Endothelial cell of umbilical vein (primary cell): ENCODE measurements at regions of chr17 and their contacts with region 1.

Region 1: GRCh38 chr17:57875309-57876115 is 25.7 kb upstream of the MRPS23 start:
- DNase-seq: peak; percentile 98
- H3K4me3 ChIP-seq: peak overlapping the region in 1 of 3 experiments; percentile 12
- H3K27ac ChIP-seq: peak overlapping the region; percentile 96
- H3K4me1 ChIP-seq: peaks cover 58% of the 10 kb centered on the region
- H3K27me3 ChIP-seq: no peaks in the 10 kb centered on the region
- CTCF ChIP-seq: peak; percentile 57 to 58
- POLR2A ChIP-seq: peak; percentile 5

Region 2: DNA sequence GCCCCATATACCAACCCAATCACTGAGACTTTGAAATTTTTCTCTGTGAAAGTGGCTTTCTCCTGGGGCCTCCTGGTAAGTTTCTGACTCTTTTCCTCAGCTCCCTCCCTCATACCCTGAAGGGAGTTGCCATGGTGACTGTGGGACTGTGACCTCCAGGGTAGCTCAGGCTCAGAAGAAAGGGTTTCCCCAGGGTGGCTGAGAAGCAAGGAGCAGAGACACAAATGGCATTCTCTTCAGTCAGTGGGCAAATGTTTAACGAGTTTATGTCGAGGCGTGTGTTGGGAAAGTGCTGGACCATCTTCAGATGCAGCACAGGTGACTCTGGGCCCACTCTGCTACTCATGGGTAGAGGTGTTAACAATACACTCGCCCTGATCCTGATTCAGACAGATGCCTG is 72.5 kb before region 1 on chr17:
- CTCF ChIA-PET with region 1: no interaction called
- POLR2A ChIA-PET with region 1: no interaction called
- dilution Hi-C with region 1: no loop called
- intact Hi-C with region 1: no loop called
- DNase-seq: no peak
- H3K4me3 ChIP-seq: no peak overlapping the region
- H3K27ac ChIP-seq: no peak overlapping the region
- H3K4me1 ChIP-seq: no peaks in the 10 kb centered on the region
- H3K27me3 ChIP-seq: peaks cover 0 to 2% of the 10 kb centered on the region in 2 experiments
- CTCF ChIP-seq: no peak
- POLR2A ChIP-seq: no peak

Region 3: GRCh38 chr17:57861000-57861789 is 14.3 kb before region 1 on chr17:
- CTCF ChIA-PET with region 1: interaction called, 202 read pairs
- POLR2A ChIA-PET with region 1: interaction called, 9 read pairs
- dilution Hi-C with region 1: no loop called
- intact Hi-C with region 1: loop called (anchors 1 kb)
- DNase-seq: peak; percentile 30
- H3K4me3 ChIP-seq: peak overlapping the region; percentile 21 to 49 (median 31)
- H3K27ac ChIP-seq: no peak overlapping the region
- H3K4me1 ChIP-seq: peaks cover 17% of the 10 kb centered on the region
- H3K27me3 ChIP-seq: no peaks in the 10 kb centered on the region
- CTCF ChIP-seq: no peak
- POLR2A ChIP-seq: no peak

Region 4: GRCh38 chr17:57902800-57903759 is 27.6 kb after region 1 on chr17:
- CTCF ChIA-PET with region 1: interaction called, 11 read pairs
- POLR2A ChIA-PET with region 1: interaction called, 7 read pairs
- dilution Hi-C with region 1: no loop called
- intact Hi-C with region 1: loop called (anchors 1 kb)
- DNase-seq: peak; percentile 80
- H3K4me3 ChIP-seq: no peak overlapping the region
- H3K27ac ChIP-seq: peak overlapping the region; percentile 71
- H3K4me1 ChIP-seq: peaks cover 19% of the 10 kb centered on the region
- H3K27me3 ChIP-seq: no peaks in the 10 kb centered on the region
- CTCF ChIP-seq: no peak
- POLR2A ChIP-seq: no peak

Region 5: DNA sequence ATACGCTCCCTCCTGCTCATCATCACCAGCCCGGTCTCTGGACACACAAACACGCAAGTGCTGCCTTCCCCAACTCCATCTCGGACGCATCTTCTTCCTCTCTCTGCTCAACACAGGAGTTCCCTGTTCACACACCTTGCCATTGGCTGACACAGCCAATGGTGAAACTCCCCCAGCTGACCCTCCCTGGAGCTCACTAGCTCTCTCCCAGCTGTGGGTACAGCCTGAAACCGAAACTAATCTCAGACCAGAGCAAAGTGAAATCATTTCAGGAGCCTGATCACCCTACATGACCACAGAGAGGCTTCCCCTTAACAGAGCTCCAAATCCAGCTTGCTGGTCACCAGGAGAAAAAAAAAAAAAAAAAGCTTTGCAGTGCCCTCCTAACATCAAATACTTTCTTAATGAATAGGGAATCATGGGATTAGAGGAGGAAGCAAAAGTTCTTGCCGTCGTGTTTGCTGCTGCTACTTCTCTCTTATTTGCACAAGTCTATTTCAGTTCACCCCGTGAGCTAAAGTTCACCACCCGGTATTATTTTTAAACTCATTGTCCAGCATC is 71.4 kb after region 1 on chr17:
- CTCF ChIA-PET with region 1: interaction called, 15 read pairs
- POLR2A ChIA-PET with region 1: interaction called, 6 read pairs
- dilution Hi-C with region 1: no loop called
- intact Hi-C with region 1: no loop called
- DNase-seq: peak; percentile 70
- H3K4me3 ChIP-seq: peak overlapping the region in 2 of 3 experiments; percentile 8 to 36
- H3K27ac ChIP-seq: no peak overlapping the region
- H3K4me1 ChIP-seq: peaks cover 37% of the 10 kb centered on the region
- H3K27me3 ChIP-seq: no peaks in the 10 kb centered on the region
- CTCF ChIP-seq: no peak
- POLR2A ChIP-seq: no peak

Region 6: DNA sequence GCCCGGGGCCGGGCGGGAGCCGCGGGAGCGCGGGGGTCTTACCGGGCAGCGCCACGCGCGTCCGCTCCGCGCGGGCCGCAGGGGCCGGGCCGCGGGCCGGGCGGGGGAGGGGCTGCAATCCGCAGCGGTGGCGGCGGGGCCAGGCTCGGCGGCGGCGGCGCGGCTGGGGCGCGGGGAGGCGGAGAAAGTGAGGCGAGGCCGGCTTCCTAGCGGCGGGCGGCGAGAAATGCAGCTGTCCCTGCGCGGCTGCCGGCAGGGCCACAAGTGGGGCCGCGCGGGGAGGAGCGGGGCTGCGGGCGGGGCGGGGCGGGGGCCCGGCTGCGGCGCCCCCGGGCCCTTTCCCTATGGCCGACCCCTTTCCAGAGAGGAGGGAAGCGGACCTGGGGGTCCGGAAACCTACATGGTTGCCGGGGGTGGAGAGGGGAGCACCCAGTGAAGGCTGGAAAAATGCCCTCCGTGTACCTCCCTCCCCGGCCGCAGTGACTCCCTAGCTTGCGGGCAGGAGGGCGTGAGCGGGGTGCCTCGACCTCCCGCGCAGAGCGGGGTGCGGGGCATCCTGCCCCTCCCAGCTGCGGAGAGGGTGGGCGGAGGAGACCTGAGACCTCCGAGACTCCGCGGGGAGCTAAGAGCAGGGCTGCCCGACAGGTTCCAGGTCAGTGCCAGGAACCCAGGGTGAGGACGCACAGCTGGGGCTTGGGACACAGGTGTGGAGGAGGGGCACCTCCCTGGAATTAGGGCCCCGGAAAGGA is 79.8 kb after region 1 on chr17 and contains the start of gene CUEDC1:
- CTCF ChIA-PET with region 1: interaction called, 43 read pairs
- POLR2A ChIA-PET with region 1: interaction called, 4 read pairs
- dilution Hi-C with region 1: no loop called
- intact Hi-C with region 1: loop called (anchors 1 kb)
- DNase-seq: peak; percentile 56
- H3K4me3 ChIP-seq: peak within 1 kb of the TSS; percentile 57 to 88 (median 77)
- H3K27ac ChIP-seq: peak within 1 kb of the TSS; percentile 44
- H3K4me1 ChIP-seq: peaks cover 36% of the 10 kb centered on the region
- H3K27me3 ChIP-seq: peaks cover 2 to 7% of the 10 kb centered on the region in 2 experiments
- CTCF ChIP-seq: peak in 1 of 2 donors; percentile 43
- POLR2A ChIP-seq: peak; percentile 23
- total RNA-seq, gene CUEDC1: 27.7 and 28.5 TPM in 2 replicates

Region 7: DNA sequence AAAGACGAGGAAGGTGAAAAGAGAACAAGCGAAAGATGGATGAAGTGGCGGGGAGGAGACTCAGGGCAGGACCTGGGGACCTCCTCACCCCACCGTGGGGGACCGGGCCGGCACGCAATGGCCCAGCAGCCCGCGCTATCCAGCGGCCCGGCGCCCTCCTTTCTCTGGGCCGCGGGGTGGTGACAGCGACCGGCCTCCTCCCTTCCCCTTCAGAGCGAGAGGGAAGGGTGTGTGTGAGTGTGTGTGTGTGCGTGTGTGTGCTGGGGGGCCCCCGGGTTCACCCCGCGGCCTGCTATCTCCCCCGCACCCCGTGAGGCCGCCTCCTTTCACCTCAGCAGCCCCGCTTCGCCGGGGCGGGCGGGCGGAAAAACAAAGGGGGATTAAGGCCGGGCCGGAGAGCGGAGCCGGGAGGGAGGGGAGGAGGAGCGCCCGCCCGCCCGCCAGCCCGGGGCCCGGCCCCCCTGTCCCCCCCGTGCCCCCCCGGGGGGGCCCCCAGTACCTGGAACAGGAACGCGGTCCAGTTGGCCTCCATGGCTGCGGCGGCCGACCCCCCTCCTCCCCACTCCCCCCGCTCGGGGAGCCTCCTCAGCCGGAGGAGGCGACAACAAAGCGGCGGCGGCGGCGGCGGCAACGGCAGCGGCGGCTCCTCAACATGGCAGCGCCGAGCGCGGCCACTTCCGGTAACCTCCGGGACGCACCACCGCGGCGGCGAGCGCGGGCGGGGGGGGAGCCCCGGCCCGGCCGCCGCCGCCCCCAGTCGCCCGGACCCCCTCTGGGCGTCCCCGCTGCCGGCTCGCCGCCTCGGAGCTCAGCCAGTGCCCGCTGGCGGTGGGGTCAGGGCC is 112.3 kb after region 1 on chr17 and contains the start of gene VEZF1:
- CTCF ChIA-PET with region 1: interaction called, 45 read pairs
- POLR2A ChIA-PET with region 1: interaction called, 9 read pairs
- dilution Hi-C with region 1: loop called (anchors 25 kb)
- intact Hi-C with region 1: loop called (anchors 1 kb)
- DNase-seq: peak; percentile 49
- H3K4me3 ChIP-seq: peak within 1 kb of the TSS; percentile 81 to 89 (median 86)
- H3K27ac ChIP-seq: peak within 1 kb of the TSS; percentile 92
- H3K4me1 ChIP-seq: peaks cover 47% of the 10 kb centered on the region
- H3K27me3 ChIP-seq: no peaks in the 10 kb centered on the region
- CTCF ChIP-seq: no peak
- POLR2A ChIP-seq: no peak
- total RNA-seq, gene VEZF1: 58.2 and 59.0 TPM in 2 replicates

Region 8: DNA sequence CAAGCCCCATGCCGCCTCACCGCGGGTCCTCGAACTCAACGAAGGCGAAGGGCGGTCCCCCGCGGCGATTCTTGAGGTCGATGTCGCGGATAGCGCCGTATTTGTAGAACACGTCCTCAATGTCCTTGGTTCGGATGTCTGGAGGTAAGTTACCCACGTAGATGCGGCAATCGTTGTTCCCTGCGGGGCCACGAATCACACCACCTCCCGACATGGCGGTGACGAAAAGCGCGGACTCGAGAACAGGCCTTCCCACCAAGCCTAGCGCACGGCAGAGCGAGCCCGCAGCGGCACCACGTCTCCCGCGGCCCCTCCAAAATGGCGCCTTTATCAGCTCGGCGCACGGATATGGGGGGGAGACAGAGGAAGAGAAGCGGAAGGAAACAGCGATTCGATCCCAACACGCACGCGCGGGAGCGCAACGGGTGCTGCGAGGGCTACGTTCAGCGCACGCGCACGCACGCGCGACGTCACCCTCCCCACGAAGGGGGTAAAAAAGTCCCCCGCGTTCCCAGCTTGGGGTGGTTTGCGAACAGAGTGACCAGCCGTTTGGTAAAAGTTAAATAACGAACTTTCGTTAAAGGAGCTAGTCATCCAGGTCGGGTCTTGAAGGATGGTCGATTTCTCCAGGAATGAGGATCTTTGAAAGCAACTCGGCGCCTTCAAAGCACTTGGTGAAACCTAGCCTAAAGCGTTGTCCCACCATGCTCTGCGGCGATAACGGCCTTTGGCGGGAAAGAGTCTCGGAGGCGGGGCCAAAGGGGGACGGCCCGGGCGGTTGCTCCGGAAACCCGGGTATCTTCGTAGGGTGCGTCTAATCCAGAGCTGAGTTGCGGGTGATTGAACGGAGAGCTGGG is 131.6 kb after region 1 on chr17 and contains the start of gene SRSF1:
- CTCF ChIA-PET with region 1: interaction called, 42 read pairs
- POLR2A ChIA-PET with region 1: interaction called, 4 read pairs
- dilution Hi-C with region 1: no loop called
- intact Hi-C with region 1: no loop called
- DNase-seq: peak; percentile 98
- H3K4me3 ChIP-seq: peak within 1 kb of the TSS; percentile 39 to 95 (median 85)
- H3K27ac ChIP-seq: peak within 1 kb of the TSS; percentile 67
- H3K4me1 ChIP-seq: peaks cover 36% of the 10 kb centered on the region
- H3K27me3 ChIP-seq: no peaks in the 10 kb centered on the region
- CTCF ChIP-seq: no peak
- POLR2A ChIP-seq: peak; percentile 97
- total RNA-seq, gene SRSF1: 309 and 316 TPM in 2 replicates